ENCODE measurements at regions of chr16 and their contacts with region 1.

Region 1: DNA sequence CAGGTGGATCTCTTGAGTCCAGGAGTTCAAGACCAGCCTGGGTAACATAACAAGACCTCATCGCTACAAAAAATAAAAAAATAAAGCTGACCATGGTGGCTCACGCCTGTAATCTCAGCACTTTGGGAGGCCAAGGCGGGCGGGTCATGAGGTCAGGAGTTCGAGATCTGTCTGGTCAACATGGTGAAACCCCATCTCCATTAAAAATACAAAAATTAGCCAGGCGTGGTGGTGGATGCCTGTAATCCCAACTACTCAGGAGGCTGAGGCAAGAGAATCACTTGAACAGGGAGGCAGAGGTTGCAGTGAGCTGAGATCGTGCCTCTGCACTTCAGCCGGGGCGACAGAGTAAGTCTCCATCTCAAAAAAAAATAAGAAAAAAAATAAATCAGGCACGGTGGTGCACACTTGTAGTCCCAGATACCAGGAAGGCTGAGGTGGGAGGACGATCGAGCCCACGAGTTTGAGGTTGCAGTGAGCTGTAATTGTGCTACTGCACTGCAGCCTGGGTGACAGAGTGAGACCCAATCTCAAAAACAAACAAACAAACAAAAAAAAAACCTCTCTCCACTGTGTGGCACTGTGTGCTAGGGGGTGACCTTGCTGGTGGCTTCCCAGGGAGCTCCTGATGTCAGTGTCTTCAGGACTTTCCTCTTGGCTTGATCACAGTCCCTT is 19.8 kb upstream of the MAPK3 start:
- DNase-seq: peak in 1 of 2 experiments; percentile 23
- H3K4me3 ChIP-seq: no peak overlapping the region
- H3K4me3 Mint-ChIP-seq: no peak overlapping the region
- H3K27ac Mint-ChIP-seq: no peak overlapping the region
- H3K4me1 ChIP-seq: peaks cover 9% of the 10 kb centered on the region; the same call in 1 of the 2 replicates
- H3K4me1 Mint-ChIP-seq: peaks cover 8% of the 10 kb centered on the region
- H3K27me3 ChIP-seq: no peaks in the 10 kb centered on the region
- H3K27me3 Mint-ChIP-seq: no peaks in the 10 kb centered on the region
- CTCF ChIP-seq: peak in 1 of 2 experiments; percentile 4

Region 2: DNA sequence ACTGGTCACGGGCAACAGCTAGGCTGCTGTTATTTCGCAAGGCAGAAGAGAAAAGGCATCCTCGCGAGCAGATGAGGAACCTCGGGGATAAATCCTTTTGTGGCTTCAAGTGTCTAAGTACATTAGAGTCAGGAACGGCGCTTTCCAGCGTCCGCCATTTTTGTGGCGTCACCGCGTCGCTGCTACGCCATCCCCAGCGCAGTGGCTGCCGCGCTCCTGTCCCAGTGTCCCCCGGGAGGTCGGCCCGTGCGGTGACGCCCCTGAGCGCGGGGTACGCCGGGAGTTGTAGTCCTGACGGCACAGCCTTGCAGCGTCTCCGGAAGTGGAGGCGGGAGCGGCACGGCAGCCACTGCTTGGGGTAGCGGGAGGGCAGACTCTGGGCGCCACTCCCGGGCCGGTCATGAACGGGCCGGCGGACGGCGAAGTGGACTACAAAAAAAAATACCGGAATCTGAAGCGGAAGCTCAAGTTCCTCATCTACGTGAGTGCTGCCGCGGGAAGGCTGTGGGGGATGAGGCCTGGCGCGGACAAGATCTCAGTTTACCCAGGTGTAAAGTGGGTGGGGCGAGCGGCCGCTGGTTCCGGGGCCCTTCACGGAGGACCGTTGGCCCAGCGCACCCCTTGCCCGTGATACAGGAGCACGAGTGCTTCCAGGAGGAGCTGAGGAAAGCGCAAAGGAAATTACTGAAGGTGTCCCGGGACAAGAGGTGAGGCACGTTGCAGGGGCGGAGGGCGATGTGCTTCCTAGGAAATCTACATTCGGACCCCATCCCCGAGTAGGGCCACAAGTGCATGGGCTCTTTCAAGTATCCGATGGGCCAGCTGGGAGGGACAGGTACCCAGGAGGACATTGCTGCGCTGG is 146.7 kb before region 1 on chr16 and contains the start of gene INO80E:
- CTCF ChIA-PET with region 1: no interaction called
- POLR2A ChIA-PET with region 1: no interaction called
- intact Hi-C with region 1: no loop called
- DNase-seq: peak; percentile 97 to 98
- H3K4me3 ChIP-seq: peak within 1 kb of the TSS; percentile 68
- H3K4me3 Mint-ChIP-seq: peak within 1 kb of the TSS; percentile 99
- H3K27ac Mint-ChIP-seq: peak within 1 kb of the TSS; percentile 65
- H3K4me1 ChIP-seq: peaks cover 11% of the 10 kb centered on the region; the same call in 1 of the 2 replicates
- H3K4me1 Mint-ChIP-seq: peaks cover 12% of the 10 kb centered on the region
- H3K27me3 ChIP-seq: no peaks in the 10 kb centered on the region
- H3K27me3 Mint-ChIP-seq: no peaks in the 10 kb centered on the region
- CTCF ChIP-seq: no peak
- total RNA-seq, gene INO80E: 58.6 and 58.8 TPM in 2 replicates

Region 3: GRCh38 chr16:30122604-30123160 is 20.1 kb before region 1 on chr16:
- CTCF ChIA-PET with region 1: interaction called, 3 read pairs
- POLR2A ChIA-PET with region 1: no interaction called
- intact Hi-C with region 1: loop called (anchors 2 kb)
- DNase-seq: peak in 1 of 2 experiments; percentile 48
- H3K4me3 ChIP-seq: peak overlapping the region; percentile 92
- H3K4me3 Mint-ChIP-seq: peak overlapping the region; percentile 85
- H3K27ac Mint-ChIP-seq: peak overlapping the region; percentile 84
- H3K4me1 ChIP-seq: peaks cover 7% of the 10 kb centered on the region
- H3K4me1 Mint-ChIP-seq: peaks cover 6% of the 10 kb centered on the region
- H3K27me3 ChIP-seq: no peaks in the 10 kb centered on the region
- H3K27me3 Mint-ChIP-seq: no peaks in the 10 kb centered on the region
- CTCF ChIP-seq: no peak